ENCODE measurements at regions of chr3 and their contacts with region 1.

Region 1: DNA sequence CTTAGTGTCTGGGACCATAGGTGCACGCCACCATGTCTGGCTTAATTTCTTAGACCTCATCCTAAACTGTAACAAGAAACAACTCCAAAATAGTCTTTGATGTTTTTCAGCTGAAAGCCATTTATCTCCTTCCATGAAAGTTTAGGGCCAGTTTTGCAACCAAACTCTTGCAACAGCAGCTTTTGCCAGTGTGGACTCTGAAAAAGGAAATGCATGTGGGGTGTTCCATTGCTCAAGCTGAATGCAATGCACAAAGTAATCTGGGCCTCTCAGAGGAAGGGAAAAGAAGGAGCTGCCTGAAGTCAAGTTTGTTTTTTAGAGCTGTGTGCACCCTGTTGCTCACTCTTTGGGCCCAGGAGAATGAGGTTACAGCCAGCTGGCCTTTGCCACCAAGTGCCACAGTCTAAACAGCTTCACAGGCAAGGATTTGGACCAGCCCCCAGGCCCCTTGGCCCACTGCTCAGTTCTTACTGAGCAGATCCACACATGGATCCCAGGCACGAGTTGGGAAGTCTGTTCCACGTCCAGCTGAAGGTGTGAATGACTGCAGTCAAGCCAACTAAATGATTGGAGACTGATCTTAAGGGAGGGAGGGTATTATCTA is 212.3 kb upstream of the LRRFIP2 start:
- DNase-seq: no peak
- ATAC-seq: no peak
- H3K4me3 ChIP-seq: no peak overlapping the region
- H3K27ac ChIP-seq: no peak overlapping the region
- H3K4me1 ChIP-seq: no peaks in the 10 kb centered on the region; a peak in 1 of 5 replicates
- H3K27me3 ChIP-seq: no peaks in the 10 kb centered on the region
- CTCF ChIP-seq: no peak
- EP300 ChIP-seq: no peak
- POLR2A ChIP-seq: no peak
- RAD21 ChIP-seq: no peak

Region 2: DNA sequence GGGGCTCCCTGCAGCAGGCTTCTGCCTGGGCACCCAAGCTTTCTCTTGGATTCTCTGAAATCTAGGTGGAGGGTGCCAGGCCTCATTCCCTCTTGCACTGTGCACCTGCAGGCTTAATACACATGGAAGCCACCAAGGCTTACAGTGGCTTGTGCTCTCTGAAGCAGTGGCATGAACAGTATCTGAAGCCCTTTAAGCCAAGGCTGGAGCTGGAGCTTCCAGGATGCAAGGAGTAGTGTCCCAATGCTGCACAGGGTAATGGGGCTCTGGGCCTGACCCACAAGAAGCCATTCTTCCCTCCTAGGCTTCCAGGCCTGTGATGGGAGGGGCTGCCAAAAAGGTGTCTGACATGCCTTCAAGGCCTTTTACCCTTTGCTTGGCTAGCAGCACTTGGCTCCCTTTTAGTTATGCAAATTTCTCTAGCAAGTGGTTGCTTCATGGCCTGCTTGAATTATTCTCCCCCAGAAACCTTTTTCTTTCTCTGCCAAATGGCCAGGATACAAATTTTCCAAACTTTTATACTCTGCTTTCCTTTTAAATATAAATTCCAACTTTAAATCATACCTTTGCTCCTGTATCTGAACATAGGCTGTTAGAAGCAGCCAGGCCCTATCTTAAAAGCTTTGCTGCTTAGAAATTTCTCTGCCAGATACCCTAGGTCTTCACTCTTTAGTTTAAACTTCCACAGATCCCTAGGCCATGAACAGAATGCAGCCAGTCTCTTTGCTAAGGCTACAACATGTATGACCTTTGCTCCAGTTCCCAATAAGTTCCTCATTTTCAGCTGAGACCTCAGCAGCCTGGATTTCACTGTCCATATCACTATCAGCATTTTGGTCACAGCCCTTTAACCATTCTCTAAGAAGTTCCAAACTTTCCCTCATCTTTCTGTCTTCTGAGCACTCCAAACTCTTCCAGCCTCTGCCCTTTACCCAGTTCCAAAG is 11.3 kb before region 1 on chr3:
- CTCF ChIA-PET with region 1: no interaction called
- POLR2A ChIA-PET with region 1: interaction called, 30 read pairs
- in situ Hi-C with region 1: no loop called
- intact Hi-C with region 1: no loop called
- DNase-seq: peak in 1 of 4 experiments; percentile 14
- ATAC-seq: peak; percentile 64
- H3K4me3 ChIP-seq: no peak overlapping the region
- H3K27ac ChIP-seq: no peak overlapping the region
- H3K4me1 ChIP-seq: peaks cover 0 to 7% of the 10 kb centered on the region in 2 experiments; a peak in 2 of 5 replicates
- H3K27me3 ChIP-seq: no peaks in the 10 kb centered on the region
- CTCF ChIP-seq: no peak
- EP300 ChIP-seq: no peak
- POLR2A ChIP-seq: no peak
- RAD21 ChIP-seq: no peak